MCF 10A (cell line): ENCODE measurements at regions of chr5 and their contacts with region 1.

Region 1: GRCh38 chr5:91383027-91383955 is at the start of gene ARRDC3:
- DNase-seq: peak; percentile 96
- H3K4me3 Mint-ChIP-seq: peak within 1 kb of the TSS; percentile 80
- H3K27ac Mint-ChIP-seq: peak within 1 kb of the TSS; percentile 99
- H3K4me1 Mint-ChIP-seq: no peaks in the 10 kb centered on the region
- H3K27me3 Mint-ChIP-seq: no peaks in the 10 kb centered on the region
- CTCF ChIP-seq: no peak
- total RNA-seq, gene ARRDC3: 35.5 and 41.6 TPM in 2 replicates

Region 2: DNA sequence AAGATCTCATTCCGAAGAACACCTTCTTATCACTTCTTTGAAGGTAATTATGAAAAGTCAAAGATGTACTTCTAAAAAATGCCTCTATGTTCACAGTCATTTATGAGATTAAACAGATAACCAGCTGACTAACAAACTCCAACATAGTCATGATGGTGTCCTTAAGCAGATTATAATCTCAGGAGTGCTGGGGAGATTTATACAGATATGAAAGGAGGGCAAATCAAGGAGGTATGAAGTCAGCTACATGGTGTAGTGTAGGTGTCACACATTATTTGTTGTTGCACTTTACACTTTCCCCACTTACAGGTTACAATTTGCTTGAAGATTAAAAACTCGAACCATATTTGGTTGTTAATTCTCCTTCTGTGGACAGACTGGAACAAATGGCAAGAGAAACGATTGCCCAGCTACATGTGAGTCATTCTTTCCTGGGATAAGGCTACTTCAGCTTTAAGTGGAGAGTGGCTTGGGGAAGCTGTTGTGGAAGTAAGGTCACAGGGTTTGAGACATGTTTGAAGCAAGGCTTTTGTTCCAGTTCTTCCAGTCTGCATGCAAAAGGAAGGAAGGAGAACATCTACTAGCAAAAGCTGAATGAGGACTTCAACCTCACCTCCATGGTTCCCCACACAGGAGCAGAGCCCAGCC is 504.6 kb before region 1 on chr5:
- CTCF ChIA-PET with region 1: interaction called, 4 read pairs
- POLR2A ChIA-PET with region 1: interaction called, 28 read pairs
- intact Hi-C with region 1: no loop called
- DNase-seq: peak; percentile 23
- H3K4me3 Mint-ChIP-seq: no peak overlapping the region
- H3K27ac Mint-ChIP-seq: no peak overlapping the region
- H3K4me1 Mint-ChIP-seq: peaks cover 6% of the 10 kb centered on the region
- H3K27me3 Mint-ChIP-seq: no peaks in the 10 kb centered on the region
- CTCF ChIP-seq: no peak

Region 3: GRCh38 chr5:91022518-91022917 is 360.8 kb before region 1 on chr5:
- CTCF ChIA-PET with region 1: interaction called, 3 read pairs
- POLR2A ChIA-PET with region 1: interaction called, 34 read pairs
- intact Hi-C with region 1: no loop called
- DNase-seq: no peak
- H3K4me3 Mint-ChIP-seq: no peak overlapping the region
- H3K27ac Mint-ChIP-seq: peak overlapping the region; percentile 12
- H3K4me1 Mint-ChIP-seq: peaks cover 20% of the 10 kb centered on the region
- H3K27me3 Mint-ChIP-seq: no peaks in the 10 kb centered on the region
- CTCF ChIP-seq: no peak

Region 4: GRCh38 chr5:91151947-91152346 is 231.3 kb before region 1 on chr5:
- CTCF ChIA-PET with region 1: interaction called, 6 read pairs
- POLR2A ChIA-PET with region 1: interaction called, 17 read pairs
- intact Hi-C with region 1: no loop called
- DNase-seq: peak; percentile 96
- H3K4me3 Mint-ChIP-seq: no peak overlapping the region
- H3K27ac Mint-ChIP-seq: no peak overlapping the region
- H3K4me1 Mint-ChIP-seq: peaks cover 19% of the 10 kb centered on the region
- H3K27me3 Mint-ChIP-seq: no peaks in the 10 kb centered on the region
- CTCF ChIP-seq: no peak

Region 5: GRCh38 chr5:91280362-91281269 is 102.7 kb before region 1 on chr5:
- CTCF ChIA-PET with region 1: interaction called, 7 read pairs
- POLR2A ChIA-PET with region 1: interaction called, 105 read pairs
- intact Hi-C with region 1: loop called (anchors 1 kb)
- DNase-seq: peak; percentile 96
- H3K4me3 Mint-ChIP-seq: peak overlapping the region; percentile 86
- H3K27ac Mint-ChIP-seq: peak overlapping the region; percentile 98
- H3K4me1 Mint-ChIP-seq: peaks cover 19% of the 10 kb centered on the region
- H3K27me3 Mint-ChIP-seq: no peaks in the 10 kb centered on the region
- CTCF ChIP-seq: no peak

Region 6: DNA sequence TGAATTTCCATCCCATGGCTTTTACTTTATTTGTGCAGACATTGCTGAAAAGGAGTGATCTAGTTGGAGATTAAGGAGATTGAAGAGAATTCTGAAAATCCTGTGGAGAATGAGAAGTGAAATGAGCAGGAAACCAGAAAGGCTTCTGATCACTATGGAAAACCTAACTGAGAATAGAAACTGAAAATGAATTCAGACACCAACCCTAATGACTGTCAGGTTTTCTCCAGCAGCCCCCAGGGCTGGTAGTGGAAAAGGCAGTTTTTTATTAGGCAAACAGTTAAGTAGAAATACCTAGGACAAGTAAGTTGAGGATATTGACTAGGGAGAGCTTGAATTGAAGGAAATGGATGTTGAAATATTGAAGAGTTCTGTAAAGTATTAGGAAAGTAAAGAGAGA is 14.5 kb after region 1 on chr5:
- CTCF ChIA-PET with region 1: interaction called, 21 read pairs
- POLR2A ChIA-PET with region 1: interaction called, 7 read pairs
- intact Hi-C with region 1: no loop called
- DNase-seq: no peak
- H3K4me3 Mint-ChIP-seq: no peak overlapping the region
- H3K27ac Mint-ChIP-seq: no peak overlapping the region
- H3K4me1 Mint-ChIP-seq: no peaks in the 10 kb centered on the region
- H3K27me3 Mint-ChIP-seq: no peaks in the 10 kb centered on the region
- CTCF ChIP-seq: no peak

Region 7: GRCh38 chr5:93322974-93323860 is 1939.9 kb after region 1 on chr5:
- CTCF ChIA-PET with region 1: no interaction called
- POLR2A ChIA-PET with region 1: no interaction called
- intact Hi-C with region 1: no loop called
- DNase-seq: no peak
- H3K4me3 Mint-ChIP-seq: no peak overlapping the region
- H3K27ac Mint-ChIP-seq: no peak overlapping the region
- H3K4me1 Mint-ChIP-seq: no peaks in the 10 kb centered on the region
- H3K27me3 Mint-ChIP-seq: no peaks in the 10 kb centered on the region
- CTCF ChIP-seq: no peak